Activated naive CD4-positive, alpha-beta T cell treated with anti-CD3 and anti-CD28 coated beads, Interleukin-2, amount 10 ng/mL, durations not matched to agents 7 days and 5 days (primary cell): ENCODE measurements at regions of chr13 and their contacts with region 1.

Region 1: DNA sequence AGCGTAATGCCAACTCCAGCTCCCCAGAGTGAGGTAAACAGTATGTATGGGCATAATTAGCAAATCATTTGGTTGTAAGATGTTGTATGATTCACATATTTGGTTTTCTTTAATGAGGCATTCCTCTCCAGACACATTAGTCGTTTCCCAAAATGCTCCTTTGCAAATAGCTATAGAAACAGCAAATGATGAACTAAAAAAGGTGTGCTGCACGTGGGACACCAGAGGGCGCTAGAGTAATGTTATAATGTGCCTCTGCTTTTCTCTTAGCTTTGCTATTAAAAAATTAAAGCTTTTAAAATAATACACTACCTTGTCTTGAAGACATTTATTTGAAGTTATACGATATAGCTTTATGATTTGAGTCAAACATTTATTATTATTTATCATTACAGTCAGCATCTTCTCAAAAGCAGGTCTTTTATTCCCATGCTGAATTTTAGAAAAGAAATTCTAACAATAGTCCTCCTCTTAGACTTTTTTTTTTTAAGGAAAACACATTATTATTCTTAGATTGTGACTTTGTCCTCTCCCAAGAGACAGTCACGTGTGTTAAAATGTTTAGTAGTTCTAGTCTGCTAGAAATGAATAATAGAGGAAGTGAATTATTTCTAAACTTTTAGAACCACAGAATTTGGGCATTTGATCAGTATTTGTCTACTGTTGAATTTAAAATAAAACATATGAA is 121.6 kb upstream of the FRY start:
- DNase-seq: peak; percentile 66
- H3K4me3 Mint-ChIP-seq: no peak overlapping the region
- H3K27ac Mint-ChIP-seq: no peak overlapping the region
- H3K4me1 Mint-ChIP-seq: peaks cover 24% of the 10 kb centered on the region
- H3K27me3 Mint-ChIP-seq: peaks cover 34% of the 10 kb centered on the region

Region 2: DNA sequence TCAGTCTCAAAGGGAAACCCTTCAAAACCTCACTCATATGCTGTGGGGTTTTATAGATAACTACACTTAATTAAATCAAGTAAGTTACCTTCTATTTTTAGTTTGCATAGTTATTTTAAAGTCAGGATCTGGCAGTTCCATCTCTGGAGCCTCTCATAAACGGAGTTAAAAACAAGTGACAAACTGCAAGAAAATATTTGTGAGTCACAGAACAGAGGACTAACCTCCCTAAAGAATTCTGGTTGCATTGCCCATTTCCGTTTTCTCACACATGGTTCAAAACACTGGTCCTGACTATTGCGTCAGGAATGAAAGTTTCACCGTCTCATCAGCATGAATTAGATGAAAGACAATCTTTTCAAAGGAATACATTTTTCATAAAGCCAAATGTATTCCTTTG is 160.1 kb before region 1 on chr13:
- CTCF ChIA-PET with region 1: no interaction called
- DNase-seq: no peak
- H3K4me3 Mint-ChIP-seq: no peak overlapping the region
- H3K27ac Mint-ChIP-seq: no peak overlapping the region
- H3K4me1 Mint-ChIP-seq: no peaks in the 10 kb centered on the region
- H3K27me3 Mint-ChIP-seq: peaks cover 6% of the 10 kb centered on the region

Region 3: GRCh38 chr13:31896427-31896826 is 13.6 kb before region 1 on chr13:
- CTCF ChIA-PET with region 1: interaction called, 10 read pairs
- DNase-seq: no peak
- H3K4me3 Mint-ChIP-seq: no peak overlapping the region
- H3K27ac Mint-ChIP-seq: no peak overlapping the region
- H3K4me1 Mint-ChIP-seq: peaks cover 19% of the 10 kb centered on the region
- H3K27me3 Mint-ChIP-seq: peaks cover 41% of the 10 kb centered on the region

Region 4: DNA sequence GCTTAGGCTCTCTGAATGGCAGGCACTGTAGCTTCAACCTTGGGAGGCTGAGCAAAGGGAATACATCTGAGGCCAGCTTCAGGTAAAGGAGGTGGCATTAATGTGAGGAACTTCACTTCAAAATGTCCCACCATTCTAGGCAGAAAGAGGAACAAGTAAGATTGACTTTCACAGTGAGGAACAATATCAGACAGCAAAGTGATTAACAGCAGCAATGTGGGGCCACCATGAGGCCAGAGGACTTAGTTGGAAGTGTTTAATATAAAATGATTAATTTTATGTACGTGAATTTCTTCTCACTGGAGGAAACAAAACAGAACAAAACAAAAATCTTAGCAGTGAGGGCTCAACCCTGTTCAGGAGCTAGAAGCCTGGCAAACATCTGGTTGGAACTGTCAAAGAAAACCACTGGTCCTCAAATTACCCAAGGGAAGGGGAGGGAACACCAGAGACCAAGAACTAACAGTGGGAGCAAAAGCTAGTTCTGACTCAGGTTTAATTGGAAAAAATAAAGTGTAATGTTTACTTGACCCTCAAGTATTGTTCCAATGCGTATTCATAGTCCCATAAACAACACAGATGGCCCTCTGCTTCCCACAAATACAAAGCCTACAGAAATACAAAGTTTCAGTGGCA is 77.6 kb after region 1 on chr13:
- CTCF ChIA-PET with region 1: interaction called, 10 read pairs
- DNase-seq: no peak
- H3K4me3 Mint-ChIP-seq: no peak overlapping the region
- H3K27ac Mint-ChIP-seq: no peak overlapping the region
- H3K4me1 Mint-ChIP-seq: no peaks in the 10 kb centered on the region
- H3K27me3 Mint-ChIP-seq: peaks cover 10% of the 10 kb centered on the region

Region 5: GRCh38 chr13:32164622-32165268 is 254.7 kb after region 1 on chr13:
- CTCF ChIA-PET with region 1: interaction called, 12 read pairs
- DNase-seq: peak; percentile 22
- H3K4me3 Mint-ChIP-seq: no peak overlapping the region
- H3K27ac Mint-ChIP-seq: no peak overlapping the region
- H3K4me1 Mint-ChIP-seq: no peaks in the 10 kb centered on the region
- H3K27me3 Mint-ChIP-seq: no peaks in the 10 kb centered on the region

Region 6: DNA sequence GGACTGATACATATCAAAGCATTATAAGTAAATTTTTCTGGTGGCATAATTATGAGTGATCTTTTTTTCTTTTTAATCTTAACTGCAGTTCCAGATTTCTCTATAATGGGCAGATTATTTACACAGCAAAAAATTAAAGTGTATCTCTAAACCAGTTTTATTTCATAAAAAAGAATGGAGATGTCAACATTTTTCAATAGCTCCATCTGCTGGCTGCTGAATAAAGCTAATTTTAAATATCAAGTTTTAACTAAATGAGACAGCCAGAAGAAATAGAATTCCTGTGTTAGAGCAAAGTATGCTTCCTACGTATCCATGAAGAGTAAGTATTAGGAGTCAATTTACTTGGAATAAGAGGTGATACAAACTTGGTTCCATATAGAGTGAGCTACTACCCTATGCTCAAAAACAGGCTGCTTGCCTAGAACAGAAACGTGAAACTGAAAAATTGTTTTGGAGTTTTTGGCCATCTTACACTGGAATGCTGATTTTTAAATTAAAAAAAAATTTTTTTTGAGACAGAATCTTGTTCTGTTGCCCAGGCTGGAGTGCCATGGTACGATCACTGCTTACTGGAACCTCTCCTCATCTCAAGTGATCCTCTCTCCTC is 671.3 kb after region 1 on chr13:
- CTCF ChIA-PET with region 1: interaction called, 15 read pairs
- DNase-seq: no peak
- H3K4me3 Mint-ChIP-seq: no peak overlapping the region
- H3K27ac Mint-ChIP-seq: no peak overlapping the region
- H3K4me1 Mint-ChIP-seq: peaks cover 10% of the 10 kb centered on the region
- H3K27me3 Mint-ChIP-seq: peaks cover 11% of the 10 kb centered on the region